Dorsolateral prefrontal cortex (tissue), 120 donors: ENCODE measurements at regions of chr17 and their contacts with region 1.

Region 1: DNA sequence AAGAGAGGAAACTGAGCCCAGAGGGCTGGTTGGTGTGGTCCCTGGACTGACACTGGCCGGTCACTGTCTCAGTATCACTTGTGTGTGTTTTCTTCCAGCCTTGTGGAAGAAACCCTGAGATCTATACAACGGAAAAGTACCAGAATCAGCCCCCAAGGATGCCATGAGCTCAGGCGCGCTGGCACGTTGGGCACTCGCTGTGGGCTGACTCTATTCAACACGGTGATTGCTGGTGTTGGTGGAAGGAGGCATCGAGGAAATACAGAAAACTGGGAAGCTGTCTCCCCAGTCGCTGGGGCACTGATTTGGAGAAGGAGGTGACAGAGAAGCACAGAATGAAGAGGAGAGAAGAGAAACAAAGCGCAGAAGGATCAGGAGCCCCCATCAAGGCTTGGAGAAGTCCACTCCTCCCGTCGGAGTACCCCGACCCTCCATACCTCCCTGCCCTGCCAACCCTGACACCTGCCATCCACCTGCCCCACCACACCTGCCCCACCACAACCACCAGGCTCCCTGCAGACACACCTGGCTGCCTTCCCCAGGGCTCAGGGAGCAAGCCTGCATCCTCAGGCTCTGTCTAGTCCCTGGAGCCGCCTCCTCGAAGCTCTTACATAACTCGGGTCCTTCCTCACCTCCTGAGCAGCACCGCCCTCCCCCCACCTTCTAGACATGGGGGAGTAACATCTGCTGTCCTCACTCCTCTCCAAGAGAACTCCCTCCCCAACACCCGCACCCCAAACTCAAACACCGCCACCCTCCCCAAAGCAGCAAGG is 66.5 kb downstream of the RBFOX3 start:
- DNase-seq: peak in 9 of 10 donors; percentile 42 to 81 (median 72)
- H3K4me3 ChIP-seq: no peak overlapping the region
- H3K27ac ChIP-seq: peak overlapping the region in 56 of 59 donors; percentile 29 to 94 (median 80)
- H3K27me3 ChIP-seq: peaks cover 0 to 8% (median 0%) of the 10 kb centered on the region in 45 donors
- CTCF ChIP-seq: no peak

Region 2: DNA sequence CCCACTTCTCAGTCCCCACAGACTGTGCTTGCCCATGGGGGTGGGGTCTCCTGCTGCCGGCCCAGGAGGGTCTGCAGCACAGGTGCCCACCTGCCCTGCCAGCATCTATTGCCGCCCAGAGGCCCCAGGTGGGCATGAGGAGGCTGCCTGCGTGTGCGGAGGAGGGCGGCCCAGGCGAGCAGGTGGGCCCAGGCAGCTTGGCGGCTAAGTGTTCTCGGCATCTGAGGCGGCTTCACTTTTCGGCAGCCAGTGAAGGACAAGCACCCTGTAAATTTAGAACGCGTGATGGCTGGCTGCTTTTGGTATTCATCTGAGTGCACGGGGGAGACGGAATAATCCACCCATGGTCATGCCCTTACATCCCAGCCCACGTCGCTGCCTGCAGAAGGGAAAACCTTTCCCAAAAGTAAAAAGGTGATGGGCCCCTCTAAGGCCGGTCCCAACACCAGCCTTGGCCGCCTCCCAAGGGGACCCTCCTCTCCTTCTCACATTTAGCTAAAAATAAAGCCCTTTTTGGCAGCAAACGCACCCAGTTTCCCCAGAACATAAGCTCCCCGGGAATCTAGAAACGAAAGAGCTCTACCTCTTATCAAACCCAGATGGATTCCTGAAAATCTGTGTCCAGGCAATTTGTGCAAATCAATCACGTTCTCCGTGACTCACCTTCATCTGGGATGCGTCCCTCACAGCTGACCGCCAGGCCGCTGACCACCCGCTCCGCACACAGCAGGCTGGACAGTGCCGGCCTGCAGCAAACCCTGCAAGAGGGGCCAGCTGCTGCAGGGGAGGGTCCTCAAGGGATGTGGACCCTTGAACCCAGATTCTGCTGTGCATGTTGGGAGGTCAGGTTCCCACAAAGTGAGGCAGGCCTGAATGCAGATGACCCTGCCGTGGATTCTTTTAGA is 12.9 kb before region 1 on chr17:
- intact Hi-C with region 1: loop called in 1 of 2 experiments (anchors 2 kb)
- DNase-seq: peak in 5 of 10 donors; percentile 35 to 67 (median 66)
- H3K4me3 ChIP-seq: peak overlapping the region in 2 of 59 donors; percentile 22 to 28
- H3K27ac ChIP-seq: peak overlapping the region in 55 of 59 donors; percentile 32 to 92 (median 79)
- H3K27me3 ChIP-seq: peaks cover 0 to 25% (median 0%) of the 10 kb centered on the region in 45 donors
- CTCF ChIP-seq: no peak

Region 3: GRCh38 chr17:79589669-79590522 is 45.6 kb after region 1 on chr17:
- intact Hi-C with region 1: no loop called
- DNase-seq: no peak
- H3K4me3 ChIP-seq: no peak overlapping the region
- H3K27ac ChIP-seq: peak overlapping the region in 5 of 59 donors; percentile 13 to 96 (median 24)
- H3K27me3 ChIP-seq: peaks cover 0 to 29% (median 0%) of the 10 kb centered on the region in 45 donors
- CTCF ChIP-seq: no peak